A549 (cell line): ENCODE measurements at regions of chr19 and their contacts with region 1.

Region 1: GRCh38 chr19:55418185-55418584 is 10.6 kb upstream of the UBE2S start:
- DNase-seq: peak; percentile 88 to 91
- ATAC-seq: peak; percentile 94 to 95
- H3K4me3 ChIP-seq: no peak overlapping the region
- H3K27ac ChIP-seq: peak overlapping the region in 1 of 2 experiments; percentile 6; a peak in 1 of 6 replicates
- H3K4me1 ChIP-seq: peaks cover 8% of the 10 kb centered on the region; the same call in 1 of the 3 replicates
- CTCF ChIP-seq: peak; percentile 95
- EP300 ChIP-seq: no peak
- POLR2A ChIP-seq: no peak
- RAD21 ChIP-seq: peak; percentile 97 to 99

Region 2: DNA sequence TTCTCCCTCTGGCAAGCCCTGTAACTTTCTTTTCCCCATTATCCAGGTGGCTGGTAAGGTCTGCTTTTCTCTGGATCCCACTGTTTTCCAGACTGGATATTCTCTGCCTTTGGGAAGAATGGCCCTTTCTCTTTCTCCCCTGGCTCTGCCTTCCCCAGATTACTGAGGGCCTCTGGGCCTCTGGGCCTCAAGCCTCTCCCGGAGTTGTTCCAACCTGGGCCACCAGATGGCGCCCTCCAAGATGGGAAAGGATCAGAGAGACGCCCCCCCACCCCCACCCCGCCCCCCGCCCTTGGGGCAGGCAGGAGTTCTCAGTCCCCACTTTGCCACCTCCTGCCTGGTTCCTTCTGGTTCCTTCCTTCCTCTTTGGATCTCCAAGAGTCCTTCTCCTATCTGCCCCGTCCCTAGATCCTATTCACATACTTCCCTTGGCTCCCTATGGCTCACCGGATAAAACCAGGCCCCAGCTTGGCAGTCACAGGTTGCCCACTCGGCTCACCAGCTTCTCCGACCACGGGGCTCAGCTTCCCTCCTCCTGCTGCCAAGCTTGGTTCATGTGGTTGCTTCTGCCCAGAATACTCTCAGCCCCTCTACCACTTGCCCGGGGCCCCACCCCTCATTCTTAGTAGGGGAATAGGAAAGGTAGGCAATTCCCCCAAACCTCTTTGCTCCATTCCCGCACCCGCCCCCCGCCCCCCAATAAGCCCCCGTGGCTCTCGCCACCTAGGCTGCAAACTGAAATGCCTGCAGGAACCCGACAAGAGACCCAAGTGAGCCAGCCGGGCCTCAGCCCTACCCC is 329.4 kb before region 1 on chr19:
- CTCF ChIA-PET with region 1: interaction called, 26 read pairs
- POLR2A ChIA-PET with region 1: interaction called, 4 read pairs
- DNase-seq: peak; percentile 71 to 81
- ATAC-seq: peak; percentile 52 to 79
- H3K4me3 ChIP-seq: no peak overlapping the region
- H3K27ac ChIP-seq: no peak overlapping the region
- H3K4me1 ChIP-seq: no peaks in the 10 kb centered on the region
- CTCF ChIP-seq: peak; percentile 93
- EP300 ChIP-seq: no peak
- POLR2A ChIP-seq: no peak
- RAD21 ChIP-seq: peak; percentile 33 to 51; a peak in 3 of 5 replicates

Region 3: GRCh38 chr19:55197531-55197930 is 220.7 kb before region 1 on chr19:
- CTCF ChIA-PET with region 1: interaction called, 14 read pairs
- POLR2A ChIA-PET with region 1: no interaction called
- DNase-seq: peak in 1 of 2 experiments; percentile 63
- ATAC-seq: peak; percentile 68 to 78
- H3K4me3 ChIP-seq: no peak overlapping the region
- H3K27ac ChIP-seq: no peak overlapping the region
- H3K4me1 ChIP-seq: no peaks in the 10 kb centered on the region
- CTCF ChIP-seq: no peak
- EP300 ChIP-seq: no peak
- POLR2A ChIP-seq: no peak
- RAD21 ChIP-seq: no peak

Region 4: DNA sequence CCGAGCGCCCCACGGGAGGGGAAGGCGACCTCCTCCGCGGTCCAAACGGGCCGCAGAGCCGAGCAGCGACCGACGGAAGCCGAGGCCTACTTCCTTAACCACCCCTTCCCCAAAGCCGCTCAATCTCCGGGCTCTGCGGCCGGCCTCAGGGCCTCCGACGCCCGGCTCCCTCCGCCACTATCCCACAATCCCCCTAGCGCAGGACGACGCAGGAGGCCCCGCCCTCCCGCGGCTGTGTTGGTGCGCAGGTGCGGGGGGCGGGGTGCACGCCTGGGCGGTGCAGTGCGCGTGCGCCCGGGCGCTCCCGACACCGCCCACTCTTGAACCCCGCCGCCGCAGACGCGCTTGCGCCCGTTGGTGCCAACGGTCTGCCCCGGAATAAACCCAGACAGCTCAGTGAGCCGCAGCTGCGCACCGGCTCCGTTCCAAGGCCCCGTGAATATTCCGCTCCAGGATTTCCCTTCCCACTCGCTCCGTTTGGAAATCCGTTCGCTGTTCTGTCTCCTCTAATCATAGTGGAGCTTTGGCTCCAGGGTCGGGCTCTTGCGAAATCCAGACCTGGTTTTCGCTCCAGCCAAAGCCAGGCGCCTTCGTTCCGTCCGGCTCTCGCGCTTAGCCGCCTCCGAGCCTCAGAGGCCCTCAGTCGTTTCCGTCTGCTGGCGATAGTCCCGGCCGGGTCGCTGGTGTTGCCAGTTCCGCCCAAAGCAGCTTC is 159.2 kb before region 1 on chr19 and contains the start of gene PPP6R1:
- CTCF ChIA-PET with region 1: interaction called, 16 read pairs
- POLR2A ChIA-PET with region 1: no interaction called
- DNase-seq: peak; percentile 99 to 100
- ATAC-seq: peak; percentile 83 to 93
- H3K4me3 ChIP-seq: peak within 1 kb of the TSS; percentile 81
- H3K27ac ChIP-seq: peak within 1 kb of the TSS; percentile 87 to 95
- H3K4me1 ChIP-seq: peaks cover 36% of the 10 kb centered on the region
- CTCF ChIP-seq: no peak
- EP300 ChIP-seq: peak in 1 of 2 experiments; percentile 31; a peak in 1 of 5 replicates
- POLR2A ChIP-seq: peak; percentile 87
- RAD21 ChIP-seq: peak; percentile 44 to 61; a peak in 4 of 5 replicates
- polyA plus RNA-seq, gene PPP6R1: 42.9 and 44.6 TPM in 2 replicates

Region 5: GRCh38 chr19:55385740-55386529 is 32.2 kb before region 1 on chr19 and contains the start of gene RPL28:
- CTCF ChIA-PET with region 1: interaction called, 19 read pairs
- POLR2A ChIA-PET with region 1: no interaction called
- DNase-seq: peak; percentile 92 to 99
- ATAC-seq: peak; percentile 54 to 77
- H3K4me3 ChIP-seq: peak within 1 kb of the TSS; percentile 89
- H3K27ac ChIP-seq: peak within 1 kb of the TSS; percentile 91 to 99
- H3K4me1 ChIP-seq: peaks cover 50% of the 10 kb centered on the region
- CTCF ChIP-seq: no peak
- EP300 ChIP-seq: no peak
- POLR2A ChIP-seq: peak; percentile 100
- RAD21 ChIP-seq: no peak
- polyA plus RNA-seq, gene RPL28: 329 and 351 TPM in 2 replicates

Region 6: GRCh38 chr19:55447421-55448174 is 29.4 kb after region 1 on chr19:
- CTCF ChIA-PET with region 1: interaction called, 26 read pairs
- POLR2A ChIA-PET with region 1: no interaction called
- DNase-seq: peak; percentile 88 to 90
- ATAC-seq: peak; percentile 77 to 81
- H3K4me3 ChIP-seq: no peak overlapping the region
- H3K27ac ChIP-seq: no peak overlapping the region
- H3K4me1 ChIP-seq: peaks cover 27% of the 10 kb centered on the region
- CTCF ChIP-seq: no peak
- EP300 ChIP-seq: no peak
- POLR2A ChIP-seq: no peak
- RAD21 ChIP-seq: no peak

Region 7: GRCh38 chr19:55503502-55504251 is 85.5 kb after region 1 on chr19:
- CTCF ChIA-PET with region 1: interaction called, 12 read pairs
- POLR2A ChIA-PET with region 1: no interaction called
- DNase-seq: peak; percentile 95 to 96
- ATAC-seq: peak; percentile 82 to 92
- H3K4me3 ChIP-seq: peak overlapping the region; percentile 31
- H3K27ac ChIP-seq: peak overlapping the region; percentile 50 to 75; a peak in 4 of 6 replicates
- H3K4me1 ChIP-seq: no peaks in the 10 kb centered on the region
- CTCF ChIP-seq: peak; percentile 95
- EP300 ChIP-seq: no peak
- POLR2A ChIP-seq: no peak
- RAD21 ChIP-seq: peak; percentile 93 to 94